ENCODE measurements at regions of chr2 and their contacts with region 1.

Region 1: GRCh38 chr2:143524559-143525401 is 395.6 kb downstream of the ARHGAP15 start:
- DNase-seq: no peak
- ATAC-seq: peak; percentile 39

Region 2: DNA sequence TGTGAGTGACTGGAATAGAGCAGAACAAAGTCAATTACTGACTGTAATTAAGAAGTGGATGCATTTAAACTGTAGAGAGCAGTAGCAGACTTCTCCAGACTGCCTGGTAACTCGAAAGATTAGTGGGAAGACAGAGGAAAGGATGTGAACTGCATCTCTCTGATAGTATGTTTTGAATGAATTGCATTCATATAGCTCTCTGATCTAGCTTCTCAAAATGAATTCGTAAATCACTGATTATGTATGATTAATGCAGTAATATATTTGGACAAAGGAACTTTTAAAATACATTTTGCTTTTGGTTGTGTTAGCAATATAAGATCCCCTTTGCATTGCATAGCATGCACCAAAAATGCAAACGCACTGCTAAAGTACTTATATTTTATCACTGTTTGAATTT is 91.5 kb before region 1 on chr2:
- intact Hi-C with region 1: loop called (anchors 5 kb)
- DNase-seq: no peak
- ATAC-seq: peak; percentile 71

Region 3: DNA sequence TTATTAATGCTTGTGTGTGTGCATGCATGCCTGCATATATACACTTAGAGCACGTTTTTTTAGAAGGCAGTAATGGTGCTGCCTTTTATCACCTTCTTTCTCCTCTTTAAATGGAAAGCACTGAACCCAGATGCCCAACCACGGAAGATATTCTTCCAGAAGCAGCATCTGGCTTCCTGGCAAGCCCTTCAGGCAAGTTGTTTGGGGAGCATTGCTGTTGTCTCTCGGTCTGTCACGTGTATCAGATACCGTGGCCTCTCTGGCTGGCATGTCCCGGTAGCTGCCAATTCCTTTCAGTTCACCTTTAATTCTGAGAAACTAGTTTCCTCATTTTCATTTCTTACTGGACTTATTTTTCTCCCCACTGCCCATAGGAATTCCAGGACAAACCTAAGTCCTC is 192.3 kb after region 1 on chr2:
- intact Hi-C with region 1: loop called (anchors 10 kb)
- DNase-seq: no peak
- ATAC-seq: no peak

Region 4: GRCh38 chr2:143819190-143819735 is 294.5 kb after region 1 on chr2:
- intact Hi-C with region 1: no loop called
- DNase-seq: no peak
- ATAC-seq: peak; percentile 60

Region 5: GRCh38 chr2:143936848-143937722 is 412.3 kb after region 1 on chr2:
- intact Hi-C with region 1: loop called (anchors 10 kb)
- DNase-seq: peak; percentile 80
- ATAC-seq: peak; percentile 80

Measured in Right ventricle myocardium inferior (tissue), 1 donor.